Activated CD4-positive, alpha-beta T cell treated with anti-CD3 and anti-CD28 coated beads for 36 hours (primary cell): ENCODE measurements at regions of chrX and their contacts with region 1.

Region 1: GRCh38 chrX:71998836-71999509 is 88.3 kb downstream of the NHSL2 start:
- DNase-seq: peak; percentile 44
- ATAC-seq: no peak
- H3K4me3 Mint-ChIP-seq: no peak overlapping the region
- H3K27ac Mint-ChIP-seq: no peak overlapping the region
- H3K4me1 Mint-ChIP-seq: no peaks in the 10 kb centered on the region
- H3K27me3 Mint-ChIP-seq: peaks cover 2% of the 10 kb centered on the region

Region 2: GRCh38 chrX:72018277-72019112 is 19.5 kb after region 1 on chrX:
- CTCF ChIA-PET with region 1: interaction called, 6 read pairs
- POLR2A ChIA-PET with region 1: no interaction called
- intact Hi-C with region 1: loop called in 1 of 2 experiments (anchors 1 kb)
- DNase-seq: peak; percentile 89
- ATAC-seq: peak; percentile 93
- H3K4me3 Mint-ChIP-seq: no peak overlapping the region
- H3K27ac Mint-ChIP-seq: no peak overlapping the region
- H3K4me1 Mint-ChIP-seq: peaks cover 29% of the 10 kb centered on the region
- H3K27me3 Mint-ChIP-seq: peaks cover 7% of the 10 kb centered on the region

Region 3: GRCh38 chrX:72461766-72462165 is 462.8 kb after region 1 on chrX:
- CTCF ChIA-PET with region 1: no interaction called
- POLR2A ChIA-PET with region 1: no interaction called
- intact Hi-C with region 1: no loop called
- DNase-seq: no peak
- ATAC-seq: no peak
- H3K4me3 Mint-ChIP-seq: no peak overlapping the region
- H3K27ac Mint-ChIP-seq: no peak overlapping the region
- H3K4me1 Mint-ChIP-seq: no peaks in the 10 kb centered on the region
- H3K27me3 Mint-ChIP-seq: no peaks in the 10 kb centered on the region